Pancreas (tissue), 10 donors: ENCODE measurements at regions of chr16 and their contacts with region 1.

Region 1: GRCh38 chr16:27461483-27462171 is 59.7 kb downstream of the IL21R start:
- DNase-seq: no peak
- ATAC-seq: no peak
- H3K4me3 ChIP-seq: no peak overlapping the region
- H3K27ac ChIP-seq: no peak overlapping the region
- H3K4me1 ChIP-seq: no peaks in the 10 kb centered on the region
- H3K27me3 ChIP-seq: no peaks in the 10 kb centered on the region
- CTCF ChIP-seq: no peak

Region 2: GRCh38 chr16:27169511-27170071 is 292.0 kb before region 1 on chr16:
- intact Hi-C with region 1: loop called in 1 of 3 experiments (anchors 5 kb)
- DNase-seq: no peak
- ATAC-seq: peak in 3 of 4 donors; percentile 48 to 54 (median 50)
- H3K4me3 ChIP-seq: no peak overlapping the region
- H3K27ac ChIP-seq: no peak overlapping the region
- H3K4me1 ChIP-seq: no peaks in the 10 kb centered on the region
- H3K27me3 ChIP-seq: no peaks in the 10 kb centered on the region
- CTCF ChIP-seq: no peak